ENCODE measurements at regions of chr1 and their contacts with region 1.

Region 1: DNA sequence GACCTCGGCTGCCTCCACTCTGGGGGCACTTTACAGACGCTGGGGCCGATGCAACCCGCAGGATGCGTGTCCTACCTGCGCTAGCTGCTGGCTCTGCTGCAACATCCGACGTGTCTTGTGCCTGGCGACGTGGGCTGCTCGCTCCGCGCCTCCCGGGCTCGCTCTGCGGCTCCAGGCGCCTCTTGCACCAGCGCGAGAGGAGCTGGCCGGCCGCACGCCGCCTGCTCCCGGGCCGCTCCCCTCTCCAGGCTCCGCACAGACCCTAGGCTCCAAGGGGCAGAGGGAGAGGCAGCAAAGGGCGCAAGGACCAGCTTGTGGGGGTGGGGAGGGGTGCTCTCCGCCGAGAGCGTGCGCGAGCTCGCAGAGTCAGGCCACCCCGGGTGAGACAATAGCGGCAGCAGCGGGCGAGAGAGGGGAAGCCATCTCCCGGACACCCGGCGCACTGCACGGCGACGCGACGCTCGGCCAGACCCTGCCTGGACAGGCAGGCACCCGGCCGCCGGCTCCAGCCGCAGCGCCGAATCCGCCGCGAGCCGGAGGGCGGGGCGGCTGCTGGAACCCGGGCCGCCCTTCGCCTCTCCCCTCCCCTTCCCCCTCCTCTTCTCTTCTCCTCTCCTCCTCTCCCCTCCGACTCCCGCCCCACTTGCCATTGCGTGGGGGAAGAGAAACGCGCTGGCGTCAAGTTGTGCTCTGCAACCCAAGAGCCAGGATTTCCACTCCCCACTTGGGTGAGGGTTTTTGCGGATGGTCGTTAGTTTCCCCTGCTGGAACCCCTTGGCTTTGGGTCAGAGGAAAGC is at the start of gene PIK3C2B:
- DNase-seq: peak; percentile 92
- H3K4me3 Mint-ChIP-seq: peak within 1 kb of the TSS; percentile 84
- H3K27ac Mint-ChIP-seq: peak within 1 kb of the TSS; percentile 77
- H3K4me1 Mint-ChIP-seq: peaks cover 33% of the 10 kb centered on the region
- H3K27me3 Mint-ChIP-seq: peaks cover 8% of the 10 kb centered on the region
- CTCF ChIP-seq: peak; percentile 68
- total RNA-seq, gene PIK3C2B: 24.4 and 33.9 TPM in 2 replicates

Region 2: DNA sequence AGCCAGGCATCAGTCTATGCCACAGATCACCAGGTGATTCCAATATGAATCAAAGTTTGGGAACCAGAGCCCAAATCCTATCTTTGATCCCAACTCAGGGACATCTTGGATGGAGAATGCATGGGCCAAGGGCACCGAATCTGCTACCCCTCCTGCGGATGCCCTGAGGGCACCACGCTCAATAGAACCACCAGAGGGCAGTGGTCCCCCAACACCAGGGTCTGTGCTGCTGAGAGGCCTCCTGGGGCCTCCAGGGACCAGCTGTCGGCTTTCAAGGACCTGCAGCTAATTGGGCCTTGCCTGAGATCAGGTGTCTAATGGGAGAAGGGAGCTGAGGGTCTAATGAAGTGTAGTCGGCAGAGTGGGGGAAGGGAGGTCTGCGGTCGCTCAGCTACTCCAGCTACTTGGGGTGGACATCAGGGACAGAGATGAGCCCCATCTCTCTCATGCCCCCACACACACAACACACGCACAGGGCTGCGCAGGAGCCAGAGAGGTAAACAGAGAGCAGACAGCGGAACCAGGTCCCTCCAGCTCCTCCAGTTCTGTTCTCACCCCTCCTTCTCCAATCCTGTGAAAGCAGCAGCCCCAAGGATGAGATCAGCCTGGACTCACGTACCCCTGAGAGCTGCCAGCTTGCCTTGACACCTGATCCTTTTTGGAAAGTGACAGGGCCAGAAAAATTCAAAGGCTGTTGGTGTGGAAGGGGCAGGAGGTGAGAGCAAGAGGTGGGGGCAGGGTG is 47.9 kb before region 1 on chr1:
- CTCF ChIA-PET with region 1: interaction called, 132 read pairs
- intact Hi-C with region 1: loop called (anchors 2 kb)
- DNase-seq: peak; percentile 89
- H3K4me3 Mint-ChIP-seq: no peak overlapping the region
- H3K27ac Mint-ChIP-seq: no peak overlapping the region
- H3K4me1 Mint-ChIP-seq: peaks cover 79% of the 10 kb centered on the region
- H3K27me3 Mint-ChIP-seq: no peaks in the 10 kb centered on the region
- CTCF ChIP-seq: peak; percentile 73

Region 3: GRCh38 chr1:204480515-204480914 is 14.0 kb before region 1 on chr1:
- CTCF ChIA-PET with region 1: interaction called, 29 read pairs
- intact Hi-C with region 1: no loop called
- DNase-seq: no peak
- H3K4me3 Mint-ChIP-seq: no peak overlapping the region
- H3K27ac Mint-ChIP-seq: no peak overlapping the region
- H3K4me1 Mint-ChIP-seq: peaks cover 51% of the 10 kb centered on the region
- H3K27me3 Mint-ChIP-seq: no peaks in the 10 kb centered on the region
- CTCF ChIP-seq: no peak

Region 4: GRCh38 chr1:204506961-204507387 is 12.5 kb after region 1 on chr1:
- CTCF ChIA-PET with region 1: interaction called, 22 read pairs
- intact Hi-C with region 1: no loop called
- DNase-seq: peak; percentile 92
- H3K4me3 Mint-ChIP-seq: peak overlapping the region; percentile 71
- H3K27ac Mint-ChIP-seq: peak overlapping the region; percentile 100
- H3K4me1 Mint-ChIP-seq: peaks cover 45% of the 10 kb centered on the region
- H3K27me3 Mint-ChIP-seq: peaks cover 14% of the 10 kb centered on the region
- CTCF ChIP-seq: no peak

Measured in Calu3 (cell line).